Motor neuron (in vitro differentiated cells): ENCODE measurements at regions of chr5 and their contacts with region 1.

Region 1: GRCh38 chr5:126776497-126777256 is at the start of gene LMNB1:
- ATAC-seq: peak; percentile 67 to 87 (median 79)
- H3K4me3 ChIP-seq: peak within 1 kb of the TSS; percentile 56 to 89 (median 74)
- H3K27ac ChIP-seq: peak within 1 kb of the TSS; percentile 93 to 97
- H3K4me1 ChIP-seq: peaks cover 6 to 12% of the 10 kb centered on the region in 2 donors
- total RNA-seq, gene LMNB1: 1.2 to 240 (median 46.8) TPM

Region 2: DNA sequence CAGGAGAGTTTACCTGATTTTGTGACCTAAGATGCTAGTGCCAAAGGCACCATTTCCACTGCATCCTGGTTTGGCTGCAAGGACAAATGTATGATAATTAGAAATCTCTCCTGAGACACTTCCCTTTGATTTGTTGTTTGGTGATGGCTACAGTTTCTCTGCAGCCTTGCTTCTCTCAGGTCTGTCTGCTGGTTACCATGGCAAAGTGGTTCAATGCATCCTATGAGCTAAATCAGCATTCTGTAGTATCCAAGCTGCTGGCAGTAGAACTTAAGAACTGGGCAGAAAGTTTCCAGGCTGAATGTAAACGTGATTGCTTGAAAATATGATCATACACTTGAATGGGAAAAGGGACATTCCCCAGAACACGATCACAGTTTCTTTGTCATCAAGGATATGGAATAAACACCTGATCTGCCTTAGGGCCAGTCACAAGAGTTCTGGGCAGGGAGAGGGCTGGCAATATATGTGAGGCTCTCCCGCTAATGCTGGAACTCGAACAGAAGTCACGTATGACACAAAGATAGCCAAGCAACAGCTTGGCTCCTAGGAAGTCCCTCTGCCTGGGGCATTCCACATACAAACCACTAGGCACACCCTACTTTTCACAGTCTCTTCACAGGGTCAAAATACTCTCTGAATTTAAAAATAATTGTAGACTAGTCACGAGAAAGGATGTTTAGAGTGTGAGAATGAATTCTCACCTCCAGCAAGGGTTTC is 491.5 kb before region 1 on chr5:
- in situ Hi-C with region 1: no loop called
- ATAC-seq: peak; percentile 35 to 91 (median 69)
- H3K4me3 ChIP-seq: no peak overlapping the region
- H3K27ac ChIP-seq: no peak overlapping the region
- H3K4me1 ChIP-seq: peaks cover 25 to 42% of the 10 kb centered on the region in 2 donors

Region 3: GRCh38 chr5:126339215-126339805 is 437.4 kb before region 1 on chr5:
- in situ Hi-C with region 1: loop called in 1 of 9 experiments (anchors 25 kb)
- ATAC-seq: peak in 4 of 8 experiments; percentile 17 to 68 (median 55)
- H3K4me3 ChIP-seq: no peak overlapping the region
- H3K27ac ChIP-seq: no peak overlapping the region
- H3K4me1 ChIP-seq: peaks cover 28 to 38% of the 10 kb centered on the region in 2 donors

Region 4: DNA sequence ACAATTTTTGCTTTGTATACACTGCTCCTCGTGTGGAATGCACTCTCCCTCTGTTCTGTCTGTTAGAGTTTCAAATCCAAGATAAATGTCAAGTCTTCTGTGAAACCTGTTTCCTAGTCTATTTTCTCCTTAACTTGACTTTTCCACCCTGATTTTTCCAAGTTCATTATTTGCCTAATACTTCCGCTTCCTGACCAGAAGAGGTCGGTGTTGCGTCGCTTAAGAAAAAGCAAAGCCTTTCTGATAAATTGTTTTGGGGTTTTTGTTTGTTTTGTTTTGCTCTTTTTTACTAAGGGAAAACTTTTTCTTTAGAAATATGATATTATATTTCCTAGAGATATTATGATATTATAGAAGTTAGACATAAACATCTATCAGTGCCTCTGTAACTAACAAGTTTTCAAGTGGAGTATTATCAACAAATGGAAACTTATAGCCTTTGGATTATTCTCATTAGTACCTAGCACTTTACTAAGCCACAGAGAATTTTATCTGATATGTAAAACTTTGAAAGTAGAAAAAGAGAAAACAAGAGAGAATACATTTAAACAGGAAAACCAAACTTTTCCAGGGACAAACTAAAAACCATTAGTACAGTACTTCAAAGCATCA is 120.2 kb before region 1 on chr5:
- in situ Hi-C with region 1: loop called in 1 of 9 experiments (anchors 25 kb)
- ATAC-seq: no peak
- H3K4me3 ChIP-seq: no peak overlapping the region
- H3K27ac ChIP-seq: no peak overlapping the region
- H3K4me1 ChIP-seq: no peaks in the 10 kb centered on the region

Region 5: GRCh38 chr5:126676195-126676624 is 100.5 kb before region 1 on chr5:
- in situ Hi-C with region 1: loop called in 4 of 9 experiments (anchors 5 to 25 kb)
- ATAC-seq: peak in 5 of 8 experiments; percentile 31 to 64 (median 55)
- H3K4me3 ChIP-seq: no peak overlapping the region
- H3K27ac ChIP-seq: no peak overlapping the region
- H3K4me1 ChIP-seq: peaks cover 0 to 5% of the 10 kb centered on the region in 2 donors